Activated CD4-positive, alpha-beta T cell treated with anti-CD3 and anti-CD28 coated beads, Interleukin-2, amount 10 ng/mL, durations not matched to agents 24 days and 14 days (primary cell): ENCODE measurements at regions of chr2 and their contacts with region 1.

Region 1: DNA sequence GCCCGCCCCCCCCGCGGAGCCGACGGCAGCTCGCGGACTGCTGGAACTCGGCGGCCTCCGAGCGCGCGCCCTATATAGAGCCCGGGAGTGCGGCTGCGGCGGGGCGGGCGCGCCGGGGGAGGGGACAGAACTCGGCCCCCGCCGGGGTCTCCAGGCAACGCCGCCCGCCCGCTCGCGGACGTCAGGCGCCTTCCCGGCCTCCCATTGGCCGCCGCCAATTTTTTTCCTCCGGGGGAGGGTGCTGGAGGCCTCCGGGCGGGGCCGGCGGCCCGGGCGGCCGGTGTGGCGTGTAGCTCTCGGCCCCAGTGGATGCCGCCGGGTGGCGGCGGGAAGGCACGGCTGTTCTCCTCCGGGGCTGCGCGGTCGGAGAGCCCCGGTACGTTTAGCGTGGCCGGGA is at the start of gene ZFP36L2:
- DNase-seq: peak; percentile 99
- H3K4me3 Mint-ChIP-seq: peak within 1 kb of the TSS; percentile 99
- H3K27ac Mint-ChIP-seq: peak within 1 kb of the TSS; percentile 97
- H3K4me1 Mint-ChIP-seq: peaks cover 35% of the 10 kb centered on the region
- H3K27me3 Mint-ChIP-seq: peaks cover 2% of the 10 kb centered on the region
- total RNA-seq, gene ZFP36L2: 92.8 and 93.1 TPM in 2 replicates

Region 2: GRCh38 chr2:42828487-42829425 is 397.8 kb before region 1 on chr2:
- intact Hi-C with region 1: loop called (anchors 2 kb)
- DNase-seq: peak; percentile 91
- H3K4me3 Mint-ChIP-seq: no peak overlapping the region
- H3K27ac Mint-ChIP-seq: no peak overlapping the region
- H3K4me1 Mint-ChIP-seq: peaks cover 7% of the 10 kb centered on the region
- H3K27me3 Mint-ChIP-seq: peaks cover 13% of the 10 kb centered on the region

Region 3: DNA sequence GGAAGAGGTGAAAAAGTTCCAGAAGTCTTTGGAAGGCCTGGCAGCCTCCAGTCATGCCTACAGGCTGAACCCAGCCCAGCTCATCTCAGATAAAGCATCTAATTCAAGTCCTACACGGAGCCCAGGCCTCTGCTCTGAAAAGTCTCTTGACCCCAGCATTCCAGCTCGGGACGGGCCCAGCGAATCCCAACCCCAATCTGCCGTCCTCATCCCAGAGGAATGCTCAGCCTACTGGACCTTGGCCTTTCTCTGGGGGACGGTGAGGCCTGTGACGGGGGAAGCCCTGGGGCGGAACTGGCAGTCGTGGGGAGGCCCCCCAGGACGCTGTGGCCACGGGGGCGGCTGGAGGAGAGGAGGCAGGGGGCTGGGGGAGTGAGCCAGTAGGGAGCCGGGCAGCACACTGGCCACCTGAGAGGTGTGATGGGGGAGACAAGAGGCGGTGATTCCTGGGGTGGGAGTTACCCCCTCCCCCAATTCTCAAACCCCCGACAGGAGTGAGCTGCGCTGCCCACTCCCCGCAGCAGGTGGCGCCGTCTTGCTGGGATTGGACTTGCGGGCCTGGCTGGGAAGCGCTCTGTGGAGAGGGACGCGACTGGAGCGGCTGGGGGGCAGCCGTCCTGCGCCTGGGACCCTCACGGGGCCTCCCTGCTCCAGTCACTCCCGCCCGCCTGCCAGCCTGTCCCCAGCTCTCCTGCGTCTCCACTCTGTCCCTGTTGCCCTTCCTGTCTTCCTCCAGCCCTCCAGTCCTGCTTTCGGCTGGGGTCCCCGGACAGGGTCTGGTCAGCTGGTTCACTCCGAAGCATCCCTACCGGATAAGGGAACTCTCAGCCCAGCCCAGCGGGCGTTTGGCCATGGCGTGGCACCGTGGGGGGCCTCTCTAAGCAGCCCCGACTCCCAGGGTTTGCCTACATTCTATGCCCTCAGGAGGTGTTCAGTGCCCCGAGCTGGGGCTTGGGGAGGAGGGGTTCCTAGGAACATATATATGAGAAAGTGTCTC is 251.5 kb before region 1 on chr2:
- intact Hi-C with region 1: loop called (anchors 1 kb)
- DNase-seq: peak; percentile 85
- H3K4me3 Mint-ChIP-seq: no peak overlapping the region
- H3K27ac Mint-ChIP-seq: no peak overlapping the region
- H3K4me1 Mint-ChIP-seq: peaks cover 10% of the 10 kb centered on the region
- H3K27me3 Mint-ChIP-seq: no peaks in the 10 kb centered on the region

Region 4: GRCh38 chr2:43131024-43131889 is 95.3 kb before region 1 on chr2:
- intact Hi-C with region 1: loop called (anchors 1 kb)
- DNase-seq: peak; percentile 93
- H3K4me3 Mint-ChIP-seq: peak overlapping the region; percentile 64
- H3K27ac Mint-ChIP-seq: peak overlapping the region; percentile 84
- H3K4me1 Mint-ChIP-seq: peaks cover 78% of the 10 kb centered on the region
- H3K27me3 Mint-ChIP-seq: no peaks in the 10 kb centered on the region

Region 5: DNA sequence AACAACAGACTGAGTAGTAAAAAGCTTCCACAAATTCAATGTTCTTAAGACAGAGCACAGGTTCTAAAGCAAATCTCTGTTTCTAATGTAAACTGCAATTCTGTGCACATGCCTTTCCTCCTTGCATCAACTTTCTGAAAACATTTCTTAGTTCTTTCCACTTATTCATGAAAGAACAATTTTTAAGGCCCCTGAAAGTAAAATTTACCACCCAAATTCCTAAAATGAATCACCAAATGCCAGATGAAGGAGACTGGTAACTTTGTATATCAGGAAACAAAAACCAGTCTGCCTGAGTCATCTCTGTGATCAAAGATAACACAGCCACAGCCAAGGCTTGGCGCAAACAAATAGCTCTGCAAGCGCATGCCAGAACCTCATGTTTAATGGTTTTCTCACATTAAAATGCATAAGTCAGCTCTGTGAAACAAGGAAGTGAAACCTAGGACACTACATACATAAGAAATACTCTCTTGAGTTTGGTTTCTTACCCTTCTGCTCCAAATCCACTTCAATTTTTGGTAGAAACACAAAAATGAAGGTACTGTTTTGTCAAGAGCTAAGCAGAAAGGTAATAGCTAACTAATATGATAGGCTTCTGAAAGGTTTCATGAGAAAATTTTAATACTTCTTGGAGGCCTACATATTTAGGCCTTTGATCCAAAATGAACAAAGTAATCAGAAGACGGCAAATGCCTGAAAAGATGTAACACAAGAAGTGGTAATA is 199.9 kb after region 1 on chr2:
- intact Hi-C with region 1: loop called (anchors 2 kb)
- DNase-seq: peak; percentile 93
- H3K4me3 Mint-ChIP-seq: peak overlapping the region; percentile 25
- H3K27ac Mint-ChIP-seq: peak overlapping the region; percentile 49
- H3K4me1 Mint-ChIP-seq: peaks cover 41% of the 10 kb centered on the region
- H3K27me3 Mint-ChIP-seq: peaks cover 4% of the 10 kb centered on the region

Region 6: GRCh38 chr2:43467891-43468290 is 241.3 kb after region 1 on chr2:
- intact Hi-C with region 1: no loop called
- DNase-seq: no peak
- H3K4me3 Mint-ChIP-seq: no peak overlapping the region
- H3K27ac Mint-ChIP-seq: no peak overlapping the region
- H3K4me1 Mint-ChIP-seq: peaks cover under 1% of the 10 kb centered on the region
- H3K27me3 Mint-ChIP-seq: no peaks in the 10 kb centered on the region

Region 7: GRCh38 chr2:43559391-43560230 is 333.1 kb after region 1 on chr2:
- intact Hi-C with region 1: loop called (anchors 5 kb)
- DNase-seq: peak; percentile 68
- H3K4me3 Mint-ChIP-seq: peak overlapping the region; percentile 62
- H3K27ac Mint-ChIP-seq: peak overlapping the region; percentile 96
- H3K4me1 Mint-ChIP-seq: peaks cover 52% of the 10 kb centered on the region
- H3K27me3 Mint-ChIP-seq: no peaks in the 10 kb centered on the region